ENCODE measurements at regions of chr1 and their contacts with region 1.

Region 1: DNA sequence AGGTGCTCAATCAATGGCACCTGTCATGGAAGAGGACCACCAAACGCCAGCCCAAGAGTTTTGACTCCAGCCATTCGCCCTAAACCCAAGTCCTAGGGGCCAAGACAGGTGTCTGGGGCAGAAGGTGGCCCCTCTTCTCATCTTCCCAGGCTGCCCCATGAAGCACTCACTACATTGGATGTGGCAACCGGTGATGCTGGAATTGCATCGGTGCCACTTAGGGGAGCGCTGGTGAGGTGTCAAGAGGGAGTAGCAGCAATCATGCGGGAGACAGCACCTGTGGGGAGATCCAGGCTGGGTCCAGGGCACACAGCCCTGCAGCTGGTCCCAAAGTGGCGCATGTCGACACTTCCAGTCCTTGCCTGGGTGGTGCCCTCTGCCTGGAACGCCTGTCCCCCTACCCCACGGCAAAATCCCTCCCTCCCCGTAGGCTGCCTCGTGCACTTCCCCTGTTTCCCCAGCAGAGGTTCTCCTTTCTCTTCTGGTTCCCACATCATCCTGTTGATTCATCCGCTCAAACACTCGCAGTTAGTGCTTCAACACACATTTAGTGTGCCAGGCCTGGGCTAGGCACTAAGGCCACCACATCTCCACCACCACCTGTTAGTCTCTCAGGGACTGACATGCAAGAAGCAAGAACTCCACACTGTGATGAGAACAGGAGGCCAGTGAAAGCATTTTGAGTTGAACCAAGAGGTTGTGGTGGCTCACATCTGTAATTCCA is 18.5 kb downstream of the PLA2G2D start:
- DNase-seq: peak; percentile 76
- H3K4me3 ChIP-seq: no peak overlapping the region
- H3K27ac ChIP-seq: no peak overlapping the region
- H3K4me1 ChIP-seq: no peaks in the 10 kb centered on the region
- CTCF ChIP-seq: peak; percentile 87

Region 2: GRCh38 chr1:19918057-19918456 is 182.7 kb before region 1 on chr1:
- CTCF ChIA-PET with region 1: no interaction called
- POLR2A ChIA-PET with region 1: no interaction called
- intact Hi-C with region 1: loop called (anchors 5 kb)
- DNase-seq: peak; percentile 86
- H3K4me3 ChIP-seq: no peak overlapping the region
- H3K27ac ChIP-seq: no peak overlapping the region
- H3K4me1 ChIP-seq: no peaks in the 10 kb centered on the region
- CTCF ChIP-seq: peak; percentile 96

Measured in OCI-LY7 (cell line).